GM10248 (cell line): ENCODE measurements at regions of chr9 and their contacts with region 1.

Region 1: GRCh38 chr9:99478469-99479027 is 256.5 kb downstream of the SEC61B start:
- DNase-seq: no peak
- CTCF ChIP-seq: no peak

Region 2: DNA sequence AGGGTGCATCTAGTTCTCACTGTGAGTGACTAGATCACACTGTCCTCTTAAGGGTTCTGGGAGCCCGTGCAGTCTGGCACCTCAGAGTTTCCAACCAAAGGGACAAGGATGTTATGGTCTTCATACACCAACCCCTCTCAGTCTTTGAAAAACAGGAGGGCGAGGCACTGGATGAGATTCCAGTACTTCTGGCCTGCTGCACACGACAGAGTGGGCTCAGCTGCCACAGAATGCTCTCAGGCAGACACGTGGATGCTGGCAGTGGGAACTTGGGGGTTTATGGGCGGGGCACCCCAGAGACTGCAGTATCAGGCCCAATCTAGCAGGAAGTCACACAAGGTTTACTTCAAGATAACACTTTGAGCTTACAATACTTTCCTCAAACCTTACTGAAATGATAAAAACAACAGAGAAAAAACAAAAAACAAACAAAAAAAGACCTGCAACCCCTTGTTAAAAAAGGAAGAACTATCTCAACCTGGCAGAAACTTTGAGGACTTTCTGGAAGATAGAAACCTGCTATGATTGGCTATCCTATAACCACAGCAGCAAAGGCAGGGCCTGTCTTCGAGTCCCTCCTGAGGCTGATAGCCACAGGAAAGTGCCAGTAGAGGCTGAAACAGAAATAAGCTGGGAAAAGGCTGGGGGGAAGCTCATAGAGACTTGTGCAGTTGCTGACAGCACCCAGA is 401.9 kb before region 1 on chr9:
- CTCF ChIA-PET with region 1: no interaction called
- POLR2A ChIA-PET with region 1: no interaction called
- DNase-seq: peak; percentile 31
- CTCF ChIP-seq: no peak

Region 3: GRCh38 chr9:99488734-99489413 is 10.3 kb after region 1 on chr9:
- CTCF ChIA-PET with region 1: interaction called, 35 read pairs
- POLR2A ChIA-PET with region 1: no interaction called
- DNase-seq: no peak
- CTCF ChIP-seq: no peak